GM12878 (cell line): ENCODE measurements at regions of chr16 and their contacts with region 1.

Region 1: DNA sequence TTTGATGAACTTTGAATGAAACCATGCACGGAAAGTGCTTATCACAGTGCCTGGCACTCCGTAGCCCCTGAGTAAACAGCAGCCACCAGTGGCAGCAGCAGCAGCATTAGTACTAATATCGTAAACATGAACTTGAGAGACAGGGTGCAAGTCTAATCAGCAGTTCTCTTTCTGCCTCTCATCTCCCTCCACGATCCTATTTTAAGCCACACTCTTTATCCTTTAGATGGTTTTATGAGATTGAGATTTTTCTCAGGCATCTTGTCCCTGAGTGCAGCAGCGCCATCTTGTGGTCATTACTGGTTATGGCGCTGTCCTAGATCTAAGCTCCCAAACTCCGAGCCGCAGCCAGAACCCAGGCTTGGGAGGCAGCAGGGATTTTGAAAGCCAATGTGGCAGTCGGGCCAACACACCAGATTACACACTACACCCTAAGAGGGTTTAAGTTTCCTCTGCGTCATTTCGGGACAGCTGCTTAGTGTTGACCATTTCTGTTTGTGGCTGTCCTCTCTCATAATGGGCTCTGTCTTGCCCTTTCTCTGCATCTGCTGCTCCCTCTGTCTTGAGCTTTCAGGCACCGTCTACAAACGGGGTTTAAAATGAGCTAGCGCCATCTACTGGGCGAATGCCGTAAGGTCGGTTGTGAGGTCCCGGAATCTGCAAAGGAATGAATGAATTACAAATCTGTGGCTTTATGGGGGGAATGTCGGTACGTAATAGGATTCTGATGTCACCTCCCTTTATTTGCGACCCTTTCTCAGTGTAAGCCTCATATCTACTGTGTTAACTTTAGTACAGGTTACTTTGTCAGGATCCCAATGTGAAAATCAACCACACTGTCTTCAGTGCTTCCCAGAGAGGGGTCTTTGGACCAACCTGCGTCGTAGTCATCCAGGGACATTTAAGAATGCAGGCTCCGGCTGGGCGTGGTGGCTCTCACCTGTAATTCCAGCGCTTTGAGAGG is 64.5 kb downstream of the CYLD start:
- DNase-seq: peak; percentile 81
- ATAC-seq: peak; percentile 95
- H3K4me3 ChIP-seq: no peak overlapping the region
- H3K27ac ChIP-seq: no peak overlapping the region
- H3K4me1 ChIP-seq: peaks cover 4% of the 10 kb centered on the region; the same call in 1 of the 2 replicates
- H3K27me3 ChIP-seq: no peaks in the 10 kb centered on the region
- CTCF ChIP-seq: peak; percentile 84 to 90 (median 89)
- EP300 ChIP-seq: no peak
- POLR2A ChIP-seq: no peak
- RAD21 ChIP-seq: peak; percentile 87

Region 2: DNA sequence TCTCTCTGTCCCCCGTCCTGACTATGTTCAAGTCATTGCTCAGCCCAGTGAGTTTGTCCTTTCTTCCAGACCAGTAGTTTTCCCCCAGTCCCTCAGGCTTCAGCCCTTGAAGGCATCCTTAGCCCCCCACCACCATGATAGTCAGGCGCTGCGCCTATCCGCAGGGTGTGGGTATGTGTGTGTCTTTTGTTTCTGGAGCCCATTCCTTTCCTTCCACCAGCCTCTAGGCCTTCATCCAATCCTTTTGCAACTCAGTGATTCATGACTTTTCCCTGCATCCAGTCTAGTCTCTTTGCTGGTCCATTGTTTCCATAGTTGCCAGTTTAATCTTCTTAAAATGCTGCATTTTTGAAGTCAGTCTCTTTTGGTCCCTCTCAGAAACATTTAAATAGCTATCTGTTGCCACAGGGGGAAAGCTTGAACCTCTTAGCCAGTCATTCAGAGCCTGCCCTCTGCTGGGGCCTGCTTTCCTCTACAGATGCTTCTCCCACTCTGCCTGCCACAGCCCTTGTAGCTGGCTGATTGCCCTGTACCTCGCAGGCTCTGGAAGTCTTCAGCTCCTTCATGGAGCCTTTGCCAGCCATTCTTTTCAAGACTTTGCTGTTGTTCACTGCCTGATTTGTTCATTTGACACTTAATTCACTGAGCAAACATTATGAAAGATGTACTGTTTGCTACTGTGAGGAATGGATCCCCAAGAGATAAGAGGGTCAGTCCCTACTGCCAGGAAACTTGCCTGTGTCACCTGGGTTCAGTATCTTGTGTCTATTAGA is 595.9 kb before region 1 on chr16:
- CTCF ChIA-PET with region 1: interaction called, 24 read pairs
- POLR2A ChIA-PET with region 1: no interaction called
- RAD21 ChIA-PET with region 1: interaction called, 12 read pairs
- SMC1A ChIA-PET with region 1: interaction called, 6 read pairs
- in situ Hi-C with region 1: no loop called
- intact Hi-C with region 1: loop called (anchors 10 kb)
- DNase-seq: peak; percentile 48
- ATAC-seq: peak; percentile 100
- H3K4me3 ChIP-seq: no peak overlapping the region
- H3K27ac ChIP-seq: peak overlapping the region; percentile 61
- H3K4me1 ChIP-seq: peaks cover 18% of the 10 kb centered on the region
- H3K27me3 ChIP-seq: no peaks in the 10 kb centered on the region
- CTCF ChIP-seq: peak; percentile 81 to 92 (median 83)
- EP300 ChIP-seq: no peak
- POLR2A ChIP-seq: no peak
- RAD21 ChIP-seq: peak; percentile 82

Region 3: GRCh38 chr16:50354629-50355456 is 451.5 kb before region 1 on chr16:
- CTCF ChIA-PET with region 1: interaction called, 38 read pairs
- POLR2A ChIA-PET with region 1: no interaction called
- RAD21 ChIA-PET with region 1: interaction called, 24 read pairs
- SMC1A ChIA-PET with region 1: interaction called, 17 read pairs
- in situ Hi-C with region 1: no loop called
- intact Hi-C with region 1: no loop called
- DNase-seq: no peak
- ATAC-seq: no peak
- H3K4me3 ChIP-seq: no peak overlapping the region
- H3K27ac ChIP-seq: no peak overlapping the region
- H3K4me1 ChIP-seq: no peaks in the 10 kb centered on the region
- H3K27me3 ChIP-seq: no peaks in the 10 kb centered on the region
- CTCF ChIP-seq: peak; percentile 31 to 52 (median 50); a peak in 4 of 6 replicates
- EP300 ChIP-seq: no peak
- POLR2A ChIP-seq: no peak
- RAD21 ChIP-seq: no peak

Region 4: DNA sequence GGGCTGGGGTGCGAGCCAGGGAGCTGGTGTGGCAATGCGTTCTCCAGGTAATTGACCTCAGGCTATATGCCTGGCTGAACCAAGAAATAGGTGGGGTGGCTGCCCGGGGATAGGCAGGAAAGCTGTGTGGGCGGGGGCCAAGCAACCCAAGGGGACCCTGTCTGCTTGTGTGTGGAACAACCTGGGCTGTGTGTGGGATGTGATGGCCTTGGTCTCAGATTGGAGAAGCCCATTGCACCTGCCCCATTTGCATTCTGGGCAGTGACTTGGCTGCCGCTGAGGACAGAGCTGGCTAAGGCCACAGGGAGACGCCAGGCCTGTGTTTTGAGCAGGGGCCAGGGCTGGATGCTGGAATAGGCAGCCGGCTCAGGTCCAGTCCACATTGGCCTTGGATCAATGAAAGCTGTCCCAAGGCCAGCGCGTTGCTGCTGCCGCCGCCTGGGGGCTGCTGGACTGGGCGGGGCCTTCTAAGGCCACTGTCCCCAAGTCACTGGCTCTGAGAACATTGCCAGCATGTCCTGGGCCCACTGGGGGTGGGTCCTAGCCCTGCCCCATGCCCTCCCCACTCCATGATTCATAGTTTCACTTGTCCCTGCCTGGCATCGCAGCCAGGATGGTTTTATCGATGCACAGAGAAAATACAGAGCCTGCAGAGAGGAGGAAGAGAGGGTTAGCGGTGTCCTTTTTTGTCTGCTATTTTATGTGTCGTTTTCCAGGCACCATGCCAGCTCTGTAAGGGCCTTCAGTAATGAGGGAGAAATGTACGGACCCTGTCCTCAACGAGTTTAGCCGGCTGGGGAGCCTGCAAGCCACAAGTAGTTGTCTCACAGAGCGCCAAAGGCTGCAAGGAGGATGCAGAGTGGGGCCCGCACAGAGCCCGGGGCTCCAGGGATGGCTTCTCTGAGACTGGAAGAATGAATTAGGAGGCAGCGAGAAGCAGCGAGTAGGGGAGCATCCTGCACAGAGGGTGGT is 214.3 kb before region 1 on chr16:
- CTCF ChIA-PET with region 1: interaction called, 15 read pairs
- POLR2A ChIA-PET with region 1: no interaction called
- RAD21 ChIA-PET with region 1: interaction called, 4 read pairs
- SMC1A ChIA-PET with region 1: interaction called, 5 read pairs
- in situ Hi-C with region 1: no loop called
- intact Hi-C with region 1: no loop called
- DNase-seq: no peak
- ATAC-seq: no peak
- H3K4me3 ChIP-seq: no peak overlapping the region
- H3K27ac ChIP-seq: no peak overlapping the region
- H3K4me1 ChIP-seq: peaks cover 10% of the 10 kb centered on the region
- H3K27me3 ChIP-seq: no peaks in the 10 kb centered on the region
- CTCF ChIP-seq: no peak
- EP300 ChIP-seq: no peak
- POLR2A ChIP-seq: no peak
- RAD21 ChIP-seq: no peak

Region 5: GRCh38 chr16:50719518-50720337 is 86.7 kb before region 1 on chr16:
- CTCF ChIA-PET with region 1: interaction called, 10 read pairs
- POLR2A ChIA-PET with region 1: no interaction called
- RAD21 ChIA-PET with region 1: interaction called, 4 read pairs
- SMC1A ChIA-PET with region 1: no interaction called
- in situ Hi-C with region 1: no loop called
- intact Hi-C with region 1: no loop called
- DNase-seq: no peak
- ATAC-seq: peak; percentile 53
- H3K4me3 ChIP-seq: no peak overlapping the region
- H3K27ac ChIP-seq: no peak overlapping the region
- H3K4me1 ChIP-seq: no peaks in the 10 kb centered on the region
- H3K27me3 ChIP-seq: no peaks in the 10 kb centered on the region
- CTCF ChIP-seq: peak in 1 of 3 experiments; percentile 21; a peak in 1 of 6 replicates
- EP300 ChIP-seq: no peak
- POLR2A ChIP-seq: no peak
- RAD21 ChIP-seq: no peak

Region 6: DNA sequence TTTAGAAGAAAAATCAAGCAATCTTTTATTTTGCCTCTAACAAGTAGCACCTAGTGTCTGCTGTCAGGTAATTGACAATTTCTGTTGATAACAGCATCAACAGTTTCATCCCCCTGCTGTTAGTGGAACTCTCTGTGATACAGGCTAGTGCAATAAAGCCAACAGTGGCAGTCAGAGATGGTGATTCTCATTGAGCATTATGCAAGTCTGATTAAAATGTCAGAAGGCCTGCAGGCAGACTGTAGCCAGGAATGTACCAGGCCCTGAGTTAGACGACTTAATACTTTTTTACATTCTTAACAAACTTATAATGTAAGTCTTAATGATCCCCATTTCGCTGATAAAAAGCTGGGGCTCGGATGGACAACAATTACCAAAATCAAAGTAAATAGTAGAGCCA is 49.9 kb before region 1 on chr16:
- CTCF ChIA-PET with region 1: interaction called, 24 read pairs
- POLR2A ChIA-PET with region 1: no interaction called
- RAD21 ChIA-PET with region 1: interaction called, 18 read pairs
- SMC1A ChIA-PET with region 1: interaction called, 5 read pairs
- in situ Hi-C with region 1: no loop called
- intact Hi-C with region 1: no loop called
- DNase-seq: no peak
- ATAC-seq: no peak; the same call in 2 of the 3 replicates
- H3K4me3 ChIP-seq: no peak overlapping the region
- H3K27ac ChIP-seq: no peak overlapping the region
- H3K4me1 ChIP-seq: no peaks in the 10 kb centered on the region
- H3K27me3 ChIP-seq: no peaks in the 10 kb centered on the region
- CTCF ChIP-seq: no peak
- EP300 ChIP-seq: no peak
- POLR2A ChIP-seq: no peak
- RAD21 ChIP-seq: no peak